SK-N-SH (cell line): ENCODE measurements at regions of chr14 and their contacts with region 1.

Region 1: DNA sequence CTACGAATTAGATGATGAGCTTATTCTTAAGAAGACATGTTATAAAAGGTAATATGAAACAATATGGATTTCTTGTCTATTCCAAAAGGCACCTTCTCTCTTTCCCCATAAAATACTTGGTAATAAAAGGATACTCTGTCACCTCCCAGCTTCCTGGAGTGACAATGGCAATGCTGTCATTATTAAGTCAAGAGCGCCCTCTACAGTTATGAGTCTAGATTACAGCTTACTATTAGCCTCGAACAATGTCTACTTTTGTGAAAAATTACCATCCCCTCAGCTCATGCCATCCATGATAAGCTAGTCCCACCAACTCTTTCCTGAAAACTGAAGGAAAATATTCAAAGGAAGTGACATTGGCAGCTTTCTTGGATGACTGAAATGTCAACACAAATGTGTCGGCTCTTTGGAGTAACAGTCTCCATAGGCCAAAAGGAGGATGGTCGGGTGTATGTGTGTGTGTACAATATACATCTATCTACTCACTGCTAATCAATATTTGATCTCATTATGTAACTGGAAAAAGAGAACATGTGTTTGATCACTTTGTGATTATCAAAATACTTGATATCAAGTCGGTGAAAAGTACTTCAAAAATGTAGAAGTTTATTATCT is 48.7 kb upstream of the CDKN3 start:
- DNase-seq: peak; percentile 55
- H3K4me3 ChIP-seq: no peak overlapping the region; a peak in 1 of 4 replicates
- H3K27ac ChIP-seq: no peak overlapping the region
- H3K4me1 ChIP-seq: peaks cover 7 to 20% of the 10 kb centered on the region in 2 experiments; a peak in 3 of 4 replicates
- H3K27me3 ChIP-seq: no peaks in the 10 kb centered on the region; the same call in 1 of the 2 replicates
- CTCF ChIP-seq: peak; percentile 85
- EP300 ChIP-seq: no peak
- RAD21 ChIP-seq: peak; percentile 97

Region 2: DNA sequence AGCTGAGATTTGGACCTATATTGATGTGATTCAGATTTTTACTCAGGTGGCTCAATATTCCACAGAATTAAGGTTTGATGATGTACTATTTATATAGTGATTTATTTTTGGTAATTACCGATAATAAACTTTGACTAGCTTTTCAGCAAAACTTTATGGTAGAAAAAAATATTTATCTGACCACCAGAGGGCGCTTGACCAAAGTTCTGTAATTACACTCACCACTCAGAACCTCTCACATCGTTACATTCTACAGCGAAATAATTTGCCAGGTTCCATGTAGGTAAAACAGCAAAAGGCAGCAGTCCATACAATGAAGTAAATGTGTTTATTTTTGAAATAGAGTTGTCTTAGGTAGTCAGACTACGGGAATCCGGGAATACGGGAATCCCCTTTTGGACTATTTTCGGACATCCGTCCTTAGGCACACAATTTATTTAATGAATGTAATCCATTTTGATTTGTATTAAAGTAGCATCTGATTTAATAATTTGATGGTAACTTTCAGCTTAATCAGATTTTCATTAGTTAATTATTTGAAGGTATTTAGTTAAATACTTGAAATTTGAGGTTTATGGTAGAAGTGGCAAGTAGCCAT is 1052.0 kb before region 1 on chr14:
- CTCF ChIA-PET with region 1: interaction called, 22 read pairs
- POLR2A ChIA-PET with region 1: no interaction called
- DNase-seq: peak; percentile 8
- H3K4me3 ChIP-seq: no peak overlapping the region; a peak in 1 of 4 replicates
- H3K27ac ChIP-seq: no peak overlapping the region
- H3K4me1 ChIP-seq: no peaks in the 10 kb centered on the region
- H3K27me3 ChIP-seq: no peaks in the 10 kb centered on the region
- CTCF ChIP-seq: peak; percentile 80
- EP300 ChIP-seq: no peak
- RAD21 ChIP-seq: peak; percentile 51

Region 3: GRCh38 chr14:53528185-53528671 is 819.9 kb before region 1 on chr14:
- CTCF ChIA-PET with region 1: interaction called, 10 read pairs
- POLR2A ChIA-PET with region 1: no interaction called
- DNase-seq: no peak
- H3K4me3 ChIP-seq: no peak overlapping the region
- H3K27ac ChIP-seq: no peak overlapping the region
- H3K4me1 ChIP-seq: peaks cover 0 to 2% of the 10 kb centered on the region in 2 experiments; a peak in 1 of 4 replicates
- H3K27me3 ChIP-seq: no peaks in the 10 kb centered on the region
- CTCF ChIP-seq: no peak
- EP300 ChIP-seq: no peak
- RAD21 ChIP-seq: no peak

Region 4: DNA sequence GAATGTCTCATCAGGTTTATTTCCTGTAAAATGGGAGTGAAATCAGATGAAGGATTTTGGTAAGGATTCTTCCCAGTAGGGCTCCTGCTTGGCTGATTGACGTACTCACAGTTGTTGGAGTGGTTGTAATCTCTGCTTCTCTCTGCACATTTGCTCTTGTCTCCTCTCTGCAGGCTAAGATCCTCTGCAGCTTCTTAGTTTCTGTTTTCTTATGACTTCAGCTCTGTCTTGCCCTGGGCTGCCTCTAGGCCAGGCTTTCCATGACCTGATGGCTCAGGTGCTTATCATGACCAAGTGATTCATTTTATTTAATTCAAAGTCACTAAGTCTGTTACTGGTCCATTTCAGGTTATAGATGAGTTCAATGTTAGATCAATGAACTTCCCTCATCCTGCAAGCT is 800.5 kb before region 1 on chr14:
- CTCF ChIA-PET with region 1: interaction called, 10 read pairs
- POLR2A ChIA-PET with region 1: no interaction called
- DNase-seq: no peak
- H3K4me3 ChIP-seq: no peak overlapping the region
- H3K27ac ChIP-seq: no peak overlapping the region
- H3K4me1 ChIP-seq: peaks cover 0 to 5% of the 10 kb centered on the region in 2 experiments; a peak in 1 of 4 replicates
- H3K27me3 ChIP-seq: no peaks in the 10 kb centered on the region; the same call in 1 of the 2 replicates
- CTCF ChIP-seq: no peak
- EP300 ChIP-seq: no peak
- RAD21 ChIP-seq: no peak

Region 5: GRCh38 chr14:54169254-54169924 is 178.7 kb before region 1 on chr14:
- CTCF ChIA-PET with region 1: interaction called, 20 read pairs
- POLR2A ChIA-PET with region 1: no interaction called
- DNase-seq: no peak
- H3K4me3 ChIP-seq: no peak overlapping the region
- H3K27ac ChIP-seq: no peak overlapping the region
- H3K4me1 ChIP-seq: peaks cover 7 to 11% of the 10 kb centered on the region in 2 experiments; a peak in 2 of 4 replicates
- H3K27me3 ChIP-seq: peaks cover 9% of the 10 kb centered on the region; the same call in 1 of the 2 replicates
- CTCF ChIP-seq: no peak
- EP300 ChIP-seq: peak; percentile 26 to 52; a peak in 2 of 4 replicates
- RAD21 ChIP-seq: no peak

Region 6: GRCh38 chr14:54366736-54367735 is 18.9 kb after region 1 on chr14:
- CTCF ChIA-PET with region 1: interaction called, 11 read pairs
- POLR2A ChIA-PET with region 1: no interaction called
- DNase-seq: peak; percentile 30
- H3K4me3 ChIP-seq: no peak overlapping the region
- H3K27ac ChIP-seq: no peak overlapping the region
- H3K4me1 ChIP-seq: peaks cover 7 to 18% of the 10 kb centered on the region in 2 experiments; a peak in 2 of 4 replicates
- H3K27me3 ChIP-seq: no peaks in the 10 kb centered on the region
- CTCF ChIP-seq: peak; percentile 74
- EP300 ChIP-seq: no peak
- RAD21 ChIP-seq: peak; percentile 73